ENCODE measurements at regions of chr9 and their contacts with region 1.

Region 1: DNA sequence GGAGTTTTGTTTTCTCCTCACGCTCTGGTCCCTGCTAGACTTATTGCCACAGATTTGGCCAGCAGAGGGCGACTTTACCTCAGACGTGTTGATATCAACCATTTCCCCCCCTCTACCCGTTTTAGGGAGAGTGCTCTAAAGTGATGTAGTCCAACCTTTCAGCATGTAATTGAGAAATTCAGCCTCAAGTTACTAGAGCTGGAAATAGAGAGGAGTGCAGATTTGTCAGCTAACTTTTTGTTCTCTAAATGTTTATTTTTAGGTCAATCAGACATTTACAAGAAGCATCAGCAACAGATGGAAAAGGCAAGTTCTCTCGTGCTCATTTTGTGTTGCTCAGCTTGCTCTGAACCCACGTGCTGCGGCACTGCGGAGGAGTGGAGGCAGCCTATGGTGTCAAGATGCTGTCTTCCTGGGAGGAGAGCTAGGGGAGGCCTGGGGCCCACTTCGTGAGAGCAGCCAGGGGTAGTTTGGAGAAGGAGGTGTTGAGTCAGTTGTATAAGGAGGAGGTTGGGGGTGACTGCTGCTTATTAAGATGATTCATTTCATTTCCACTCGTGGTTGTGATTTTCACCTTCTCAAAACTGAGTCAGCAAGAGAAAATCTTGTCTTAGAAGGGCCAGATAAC is 53.6 kb downstream of the GPR107 start:
- DNase-seq: peak; percentile 85
- H3K4me3 ChIP-seq: no peak overlapping the region
- H3K27ac ChIP-seq: peak overlapping the region in 3 of 4 donors; percentile 52 to 78 (median 64)
- H3K4me1 ChIP-seq: peaks cover 0 to 1% (median 0%) of the 10 kb centered on the region in 4 donors
- H3K27me3 ChIP-seq: no peaks in the 10 kb centered on the region
- CTCF ChIP-seq: peak; percentile 76 to 83 (median 80)
- EP300 ChIP-seq: no peak
- POLR2A ChIP-seq: no peak

Region 2: DNA sequence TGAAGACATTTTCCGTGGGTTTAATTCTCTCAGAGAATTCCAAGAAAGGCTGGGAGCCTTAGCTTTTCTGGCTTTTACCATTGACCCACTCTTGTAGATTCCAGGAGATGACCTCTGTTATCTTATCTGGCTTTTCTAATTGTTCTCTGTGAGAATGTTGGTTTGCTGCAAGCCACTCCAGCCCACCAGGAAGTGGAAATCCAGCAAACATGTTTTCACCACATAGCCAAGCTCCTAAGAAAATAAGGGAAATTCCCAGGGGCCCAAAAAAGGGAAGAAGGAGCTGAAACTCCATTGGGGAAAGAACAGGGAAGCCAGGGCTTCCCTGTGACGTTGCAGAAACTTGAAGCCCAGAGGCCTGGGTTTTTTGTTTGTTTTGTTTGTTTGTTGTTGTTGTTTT is 34.0 kb before region 1 on chr9:
- in situ Hi-C with region 1: no loop called
- intact Hi-C with region 1: no loop called
- DNase-seq: no peak
- H3K4me3 ChIP-seq: no peak overlapping the region
- H3K27ac ChIP-seq: peak overlapping the region in 1 of 4 donors; percentile 34
- H3K4me1 ChIP-seq: peaks cover 1 to 22% (median 9%) of the 10 kb centered on the region in 4 donors
- H3K27me3 ChIP-seq: no peaks in the 10 kb centered on the region
- CTCF ChIP-seq: no peak
- EP300 ChIP-seq: no peak
- POLR2A ChIP-seq: no peak

Region 3: GRCh38 chr9:130226112-130226681 is 118.8 kb after region 1 on chr9:
- in situ Hi-C with region 1: loop called in 3 of 4 experiments (anchors 5 to 25 kb)
- intact Hi-C with region 1: loop called (anchors 5 kb)
- DNase-seq: no peak
- H3K4me3 ChIP-seq: no peak overlapping the region
- H3K27ac ChIP-seq: no peak overlapping the region
- H3K4me1 ChIP-seq: no peaks in the 10 kb centered on the region
- H3K27me3 ChIP-seq: no peaks in the 10 kb centered on the region
- CTCF ChIP-seq: no peak
- EP300 ChIP-seq: no peak
- POLR2A ChIP-seq: no peak

Region 4: GRCh38 chr9:130243015-130243734 is 135.8 kb after region 1 on chr9:
- in situ Hi-C with region 1: loop called in 3 of 4 experiments (anchors 5 to 25 kb)
- intact Hi-C with region 1: no loop called
- DNase-seq: peak; percentile 79
- H3K4me3 ChIP-seq: no peak overlapping the region
- H3K27ac ChIP-seq: no peak overlapping the region
- H3K4me1 ChIP-seq: peaks cover 0 to 7% (median 4%) of the 10 kb centered on the region in 4 donors
- H3K27me3 ChIP-seq: no peaks in the 10 kb centered on the region
- CTCF ChIP-seq: peak; percentile 91 to 98 (median 97)
- EP300 ChIP-seq: no peak
- POLR2A ChIP-seq: no peak

Region 5: GRCh38 chr9:130343445-130343918 is 236.1 kb after region 1 on chr9:
- in situ Hi-C with region 1: loop called in 1 of 4 experiments (anchors 25 kb)
- intact Hi-C with region 1: loop called (anchors 5 kb)
- DNase-seq: no peak
- H3K4me3 ChIP-seq: no peak overlapping the region
- H3K27ac ChIP-seq: no peak overlapping the region
- H3K4me1 ChIP-seq: peaks cover 0 to 3% (median 0%) of the 10 kb centered on the region in 4 donors
- H3K27me3 ChIP-seq: no peaks in the 10 kb centered on the region
- CTCF ChIP-seq: peak; percentile 70 to 79 (median 74)
- EP300 ChIP-seq: no peak
- POLR2A ChIP-seq: no peak

Region 6: GRCh38 chr9:130359819-130360218 is 252.5 kb after region 1 on chr9:
- in situ Hi-C with region 1: no loop called
- intact Hi-C with region 1: no loop called
- DNase-seq: no peak
- H3K4me3 ChIP-seq: no peak overlapping the region
- H3K27ac ChIP-seq: no peak overlapping the region
- H3K4me1 ChIP-seq: no peaks in the 10 kb centered on the region
- H3K27me3 ChIP-seq: no peaks in the 10 kb centered on the region
- CTCF ChIP-seq: no peak
- EP300 ChIP-seq: no peak
- POLR2A ChIP-seq: no peak